Calu3 (cell line): ENCODE measurements at regions of chr6 and their contacts with region 1.

Region 1: GRCh38 chr6:21754891-21755290 is 161.3 kb downstream of the SOX4 start:
- DNase-seq: peak; percentile 72
- H3K4me3 Mint-ChIP-seq: no peak overlapping the region
- H3K27ac Mint-ChIP-seq: peak overlapping the region; percentile 55
- H3K4me1 Mint-ChIP-seq: peaks cover 68% of the 10 kb centered on the region
- H3K27me3 Mint-ChIP-seq: no peaks in the 10 kb centered on the region
- CTCF ChIP-seq: no peak

Region 2: DNA sequence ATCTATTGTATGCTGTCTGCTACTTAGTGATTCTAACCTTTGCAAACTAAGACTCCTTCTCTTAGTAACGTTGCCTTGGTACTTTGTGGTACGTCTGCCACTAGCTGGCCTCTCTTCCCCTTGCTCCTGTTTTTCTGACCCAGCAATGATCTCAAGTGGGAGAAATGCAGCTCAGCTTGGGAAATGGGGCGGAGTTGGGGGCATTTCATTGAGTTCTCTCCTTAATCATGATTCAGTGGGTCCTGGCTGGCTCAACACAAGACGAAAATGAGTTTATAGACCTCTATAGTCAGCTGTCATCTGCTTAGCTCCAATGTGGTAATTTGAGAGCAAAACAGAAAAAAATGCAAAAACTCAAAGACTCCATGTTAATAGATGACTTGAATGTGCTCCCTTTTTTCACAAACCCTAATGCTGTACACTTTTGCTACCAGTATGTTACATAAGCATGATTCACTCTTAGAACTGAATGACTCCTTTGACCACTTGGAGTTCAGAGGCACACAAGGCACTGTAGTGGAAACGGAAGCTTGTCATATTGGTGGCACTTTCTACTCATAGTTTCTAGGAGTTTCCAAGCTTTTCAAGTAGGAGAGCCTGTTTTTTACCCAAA is 216.6 kb before region 1 on chr6:
- CTCF ChIA-PET with region 1: no interaction called
- intact Hi-C with region 1: no loop called
- DNase-seq: no peak
- H3K4me3 Mint-ChIP-seq: no peak overlapping the region
- H3K27ac Mint-ChIP-seq: no peak overlapping the region
- H3K4me1 Mint-ChIP-seq: peaks cover 6% of the 10 kb centered on the region
- H3K27me3 Mint-ChIP-seq: no peaks in the 10 kb centered on the region
- CTCF ChIP-seq: no peak

Region 3: DNA sequence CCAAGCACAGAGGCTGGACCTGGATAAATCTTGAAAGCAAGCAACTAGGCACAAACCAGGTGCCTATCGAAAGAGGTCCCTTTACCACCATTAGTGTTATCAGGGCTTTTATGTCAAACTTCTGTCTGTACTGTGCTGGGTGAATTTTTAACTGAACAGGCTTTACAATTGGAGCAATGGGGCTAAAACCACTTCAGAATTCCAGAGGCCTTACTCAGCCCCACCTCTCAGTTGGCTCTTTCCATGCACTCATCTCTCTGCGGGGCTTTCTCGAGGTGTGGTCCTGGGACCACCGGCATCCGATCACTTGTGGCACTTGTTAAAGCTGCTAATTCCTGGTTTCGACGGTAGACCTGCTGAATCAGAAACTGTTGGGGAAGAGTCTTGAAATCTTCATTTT is 71.1 kb after region 1 on chr6:
- CTCF ChIA-PET with region 1: no interaction called
- intact Hi-C with region 1: loop called (anchors 5 kb)
- DNase-seq: peak; percentile 62
- H3K4me3 Mint-ChIP-seq: peak overlapping the region; percentile 44
- H3K27ac Mint-ChIP-seq: peak overlapping the region; percentile 74
- H3K4me1 Mint-ChIP-seq: peaks cover 47% of the 10 kb centered on the region
- H3K27me3 Mint-ChIP-seq: no peaks in the 10 kb centered on the region
- CTCF ChIP-seq: no peak

Region 4: GRCh38 chr6:21931641-21932335 is 176.9 kb after region 1 on chr6:
- CTCF ChIA-PET with region 1: no interaction called
- intact Hi-C with region 1: loop called (anchors 5 kb)
- DNase-seq: no peak
- H3K4me3 Mint-ChIP-seq: no peak overlapping the region
- H3K27ac Mint-ChIP-seq: no peak overlapping the region
- H3K4me1 Mint-ChIP-seq: peaks cover 42% of the 10 kb centered on the region
- H3K27me3 Mint-ChIP-seq: no peaks in the 10 kb centered on the region
- CTCF ChIP-seq: no peak